B cell (primary cell): ENCODE measurements at regions of chr3 and their contacts with region 1.

Region 1: DNA sequence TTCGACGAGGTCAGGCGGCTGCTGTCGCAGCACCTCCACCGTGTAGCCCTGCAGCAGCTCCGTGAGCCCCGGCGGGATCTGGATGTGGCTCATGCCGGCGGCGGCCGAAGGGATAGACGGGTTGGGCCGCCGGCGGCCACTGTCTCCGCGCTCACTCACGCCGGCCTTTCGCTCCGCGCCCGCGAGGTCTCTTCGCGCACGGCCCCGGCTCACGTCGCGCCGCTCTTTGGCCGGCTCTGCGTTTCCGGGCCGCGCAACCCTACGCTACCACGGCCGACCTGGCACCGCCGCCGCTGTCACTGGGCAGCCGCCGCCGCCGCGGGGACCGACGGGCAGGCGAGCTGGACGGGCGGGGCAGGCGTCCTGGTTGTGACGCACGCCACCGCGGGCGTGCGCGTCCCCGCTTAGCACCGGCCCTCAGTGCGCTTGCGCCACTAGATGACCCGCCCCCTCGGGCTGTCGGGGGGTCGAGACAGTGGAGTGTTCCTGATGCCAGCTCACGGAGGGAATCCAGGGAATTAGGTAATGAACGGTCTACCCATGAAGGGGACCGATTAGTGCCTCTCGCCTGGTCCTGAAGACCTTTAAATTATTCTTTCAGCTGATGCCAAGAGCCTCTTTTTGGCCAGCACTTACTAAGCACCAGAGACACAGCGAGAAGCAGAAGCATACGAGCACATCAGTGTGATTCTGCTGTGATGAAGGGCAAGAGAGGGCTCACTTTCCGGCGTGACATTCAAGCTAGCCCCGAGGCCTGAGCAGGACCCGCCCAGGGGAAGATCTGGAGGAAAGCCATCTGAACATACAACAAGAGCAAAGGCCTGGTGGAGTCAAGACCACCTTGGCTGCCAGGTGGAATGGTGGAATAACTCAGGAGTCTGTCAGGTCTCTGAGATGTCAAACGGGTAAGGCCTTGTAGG is at the start of gene PRKAR2A:
- DNase-seq: peak; percentile 93
- ATAC-seq: peak; percentile 95
- H3K4me3 ChIP-seq: peak within 1 kb of the TSS; percentile 67 to 88 (median 80)
- H3K4me3 Mint-ChIP-seq: peak within 1 kb of the TSS; percentile 96
- H3K27ac ChIP-seq: peak within 1 kb of the TSS; percentile 68 to 89
- H3K27ac Mint-ChIP-seq: peak within 1 kb of the TSS; percentile 96
- H3K4me1 ChIP-seq: peaks cover 16 to 25% of the 10 kb centered on the region in 2 donors
- H3K4me1 Mint-ChIP-seq: peaks cover 28% of the 10 kb centered on the region
- H3K27me3 ChIP-seq: no peaks in the 10 kb centered on the region
- H3K27me3 Mint-ChIP-seq: no peaks in the 10 kb centered on the region
- CTCF ChIP-seq: no peak
- total RNA-seq, gene PRKAR2A: 25.0 and 27.5 TPM in 2 replicates

Region 2: GRCh38 chr3:48435774-48436476 is 411.8 kb before region 1 on chr3:
- CTCF ChIA-PET with region 1: no interaction called
- POLR2A ChIA-PET with region 1: no interaction called
- intact Hi-C with region 1: no loop called
- DNase-seq: peak; percentile 90
- ATAC-seq: peak; percentile 28
- H3K4me3 ChIP-seq: no peak overlapping the region
- H3K4me3 Mint-ChIP-seq: no peak overlapping the region
- H3K27ac ChIP-seq: peak overlapping the region in 1 of 2 donors; percentile 47
- H3K27ac Mint-ChIP-seq: no peak overlapping the region
- H3K4me1 ChIP-seq: peaks cover 10 to 15% of the 10 kb centered on the region in 2 donors
- H3K4me1 Mint-ChIP-seq: peaks cover 23% of the 10 kb centered on the region
- H3K27me3 ChIP-seq: no peaks in the 10 kb centered on the region
- H3K27me3 Mint-ChIP-seq: no peaks in the 10 kb centered on the region
- CTCF ChIP-seq: peak; percentile 99

Region 3: DNA sequence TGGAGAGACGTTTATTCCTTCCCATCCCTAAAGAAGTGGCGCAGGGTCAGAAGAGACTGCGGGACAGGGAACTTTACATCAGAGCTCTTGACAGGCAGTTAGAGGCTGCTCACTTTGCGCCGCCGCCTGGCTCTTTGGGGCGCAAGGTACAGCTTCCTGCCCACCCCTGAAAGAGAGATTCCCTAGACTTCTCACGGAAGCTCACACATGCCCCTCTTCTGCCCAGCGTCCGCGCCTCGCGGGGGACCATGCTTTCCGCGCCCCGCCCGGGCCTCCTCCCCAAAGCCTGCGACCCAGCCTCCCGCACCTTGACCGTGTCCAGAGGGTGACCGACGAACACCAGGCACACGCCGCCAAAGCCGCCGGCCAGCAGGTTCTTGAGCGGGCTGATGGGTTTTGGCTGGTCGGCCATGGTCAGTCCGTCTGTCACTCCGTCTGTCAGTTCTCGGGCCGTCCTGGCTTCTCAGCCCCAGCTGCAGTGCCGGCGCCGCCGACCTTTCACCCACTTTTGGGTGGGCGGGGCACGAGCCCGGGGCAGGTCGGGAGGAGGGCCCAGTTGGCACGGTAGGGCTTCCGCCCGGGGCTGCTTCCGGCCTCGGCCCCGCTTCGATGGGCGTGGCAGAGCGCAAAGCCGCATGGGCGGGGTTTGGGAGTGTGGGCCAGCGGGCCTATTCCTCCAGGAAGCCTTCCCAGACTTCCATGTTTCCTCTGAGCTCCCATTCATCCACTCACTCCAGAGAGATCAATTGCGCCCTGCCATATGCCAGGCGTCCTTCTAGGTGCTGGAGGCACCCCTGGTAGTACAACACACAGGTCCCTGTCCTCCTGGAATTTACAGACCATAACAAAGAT is 50.8 kb after region 1 on chr3 and contains the start of gene SLC25A20:
- CTCF ChIA-PET with region 1: interaction called, 3 read pairs
- POLR2A ChIA-PET with region 1: interaction called, 4 read pairs
- intact Hi-C with region 1: loop called (anchors 1 kb)
- DNase-seq: peak; percentile 88
- ATAC-seq: peak; percentile 99
- H3K4me3 ChIP-seq: peak within 1 kb of the TSS; percentile 24 to 86 (median 73)
- H3K4me3 Mint-ChIP-seq: peak within 1 kb of the TSS; percentile 95
- H3K27ac ChIP-seq: peak within 1 kb of the TSS; percentile 30 to 80
- H3K27ac Mint-ChIP-seq: peak within 1 kb of the TSS; percentile 83
- H3K4me1 ChIP-seq: peaks cover 24 to 29% of the 10 kb centered on the region in 2 donors
- H3K4me1 Mint-ChIP-seq: peaks cover 35% of the 10 kb centered on the region
- H3K27me3 ChIP-seq: no peaks in the 10 kb centered on the region
- H3K27me3 Mint-ChIP-seq: no peaks in the 10 kb centered on the region
- CTCF ChIP-seq: no peak
- total RNA-seq, gene SLC25A20: 11.6 and 12.2 TPM in 2 replicates

Region 4: GRCh38 chr3:48926425-48927392 is 78.9 kb after region 1 on chr3:
- CTCF ChIA-PET with region 1: no interaction called
- POLR2A ChIA-PET with region 1: no interaction called
- intact Hi-C with region 1: no loop called
- DNase-seq: no peak
- ATAC-seq: no peak
- H3K4me3 ChIP-seq: no peak overlapping the region
- H3K4me3 Mint-ChIP-seq: no peak overlapping the region
- H3K27ac ChIP-seq: no peak overlapping the region
- H3K27ac Mint-ChIP-seq: no peak overlapping the region
- H3K4me1 ChIP-seq: peaks cover 5 to 11% of the 10 kb centered on the region in 2 donors
- H3K4me1 Mint-ChIP-seq: peaks cover 43% of the 10 kb centered on the region
- H3K27me3 ChIP-seq: no peaks in the 10 kb centered on the region
- H3K27me3 Mint-ChIP-seq: no peaks in the 10 kb centered on the region
- CTCF ChIP-seq: no peak

Region 5: DNA sequence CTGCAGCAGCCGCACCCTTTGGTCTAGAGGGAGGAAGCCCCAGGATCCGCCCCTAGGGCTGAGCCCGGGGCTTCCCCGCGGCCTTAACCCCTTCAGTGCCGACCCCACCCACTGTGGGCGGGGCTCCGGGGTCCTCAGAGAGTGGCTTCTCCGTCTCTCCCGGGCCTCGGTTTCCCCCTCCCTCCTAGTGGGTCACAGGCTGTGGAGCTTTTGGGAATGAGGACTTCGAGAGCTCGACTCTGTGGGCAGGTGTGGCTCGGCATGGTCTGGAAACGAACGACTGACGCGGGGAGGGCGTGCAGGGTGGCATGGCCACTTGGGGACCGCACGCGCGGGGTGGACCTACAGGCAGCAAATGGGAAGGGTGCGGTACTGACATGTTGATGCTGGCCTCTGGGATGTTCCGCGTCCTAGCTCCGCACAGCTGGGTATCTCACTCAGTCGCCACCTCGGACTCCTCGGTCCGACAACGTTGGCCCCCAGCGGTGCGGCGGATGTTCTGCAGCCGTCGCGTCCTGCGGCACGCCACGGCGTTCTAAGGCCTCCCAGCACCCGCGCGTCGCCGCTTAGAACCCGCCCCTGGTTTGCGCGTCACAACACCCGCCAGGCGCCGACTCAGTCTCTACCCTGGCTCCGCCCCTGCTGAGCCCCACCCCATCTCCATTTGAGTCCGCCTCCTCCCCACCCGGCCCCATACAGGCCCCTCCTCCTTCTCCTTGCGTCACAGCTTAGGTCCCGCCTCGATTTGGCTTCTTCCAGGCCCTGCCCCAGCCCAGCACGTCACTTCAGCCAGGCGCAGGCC is 1451.3 kb after region 1 on chr3 and contains the starts of genes HYAL3 and NAA80:
- CTCF ChIA-PET with region 1: no interaction called
- POLR2A ChIA-PET with region 1: no interaction called
- intact Hi-C with region 1: no loop called
- DNase-seq: peak; percentile 100
- ATAC-seq: peak; percentile 91
- H3K4me3 ChIP-seq: peak within 1 kb of the TSS; percentile 68 to 89 (median 88)
- H3K4me3 Mint-ChIP-seq: peak within 1 kb of the TSS; percentile 100
- H3K27ac ChIP-seq: peak within 1 kb of the TSS; percentile 77 to 84
- H3K27ac Mint-ChIP-seq: peak within 1 kb of the TSS; percentile 100
- H3K4me1 ChIP-seq: peaks cover 18 to 24% of the 10 kb centered on the region in 2 donors
- H3K4me1 Mint-ChIP-seq: peaks cover 33% of the 10 kb centered on the region
- H3K27me3 ChIP-seq: no peaks in the 10 kb centered on the region
- H3K27me3 Mint-ChIP-seq: no peaks in the 10 kb centered on the region
- CTCF ChIP-seq: peak; percentile 65
- total RNA-seq, gene HYAL3: 1.9 and 3.7 TPM in 2 replicates
- total RNA-seq, gene NAA80: 33.8 and 37.8 TPM in 2 replicates

Region 6: DNA sequence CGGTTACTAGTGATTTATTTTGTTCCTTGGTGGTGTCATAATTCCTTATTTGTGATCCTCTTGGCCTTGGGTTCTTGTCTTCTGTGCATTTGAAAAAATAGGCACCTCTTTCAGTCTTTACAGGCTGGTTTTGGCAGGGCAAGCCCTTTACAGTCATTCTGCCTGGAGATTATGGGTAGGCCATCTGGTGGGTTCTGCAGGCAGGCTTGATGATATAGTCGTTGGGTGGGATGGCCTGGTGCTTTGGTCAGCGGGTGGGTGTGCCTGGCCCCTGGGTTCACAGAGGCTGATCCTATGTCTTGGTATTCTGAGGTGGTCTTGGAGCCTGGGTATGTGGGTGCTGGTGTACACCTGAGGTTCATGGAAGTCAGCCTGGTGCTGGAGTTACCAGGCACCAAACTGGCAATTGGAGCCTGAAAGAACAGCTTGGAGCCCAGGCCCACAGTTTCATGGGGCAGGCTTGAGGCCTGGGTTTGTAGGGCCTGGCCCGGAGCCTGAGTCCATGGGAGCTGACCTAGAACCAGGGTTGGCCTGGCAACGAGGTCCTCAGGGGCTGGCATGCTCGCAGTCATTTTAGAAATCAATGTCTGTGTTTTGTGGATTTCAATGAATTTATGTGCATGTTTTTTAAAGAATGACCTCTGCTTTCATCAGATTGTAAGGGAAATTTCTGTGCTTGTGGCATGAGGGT is 1890.3 kb after region 1 on chr3:
- CTCF ChIA-PET with region 1: no interaction called
- POLR2A ChIA-PET with region 1: no interaction called
- intact Hi-C with region 1: no loop called
- DNase-seq: no peak
- ATAC-seq: no peak
- H3K4me3 ChIP-seq: no peak overlapping the region
- H3K4me3 Mint-ChIP-seq: no peak overlapping the region
- H3K27ac ChIP-seq: no peak overlapping the region
- H3K27ac Mint-ChIP-seq: no peak overlapping the region
- H3K4me1 ChIP-seq: no peaks in the 10 kb centered on the region
- H3K4me1 Mint-ChIP-seq: no peaks in the 10 kb centered on the region
- H3K27me3 ChIP-seq: no peaks in the 10 kb centered on the region
- H3K27me3 Mint-ChIP-seq: peaks cover 4% of the 10 kb centered on the region
- CTCF ChIP-seq: no peak